Naive thymus-derived CD4-positive, alpha-beta T cell (primary cell): ENCODE measurements at regions of chr19 and their contacts with region 1.

Region 1: DNA sequence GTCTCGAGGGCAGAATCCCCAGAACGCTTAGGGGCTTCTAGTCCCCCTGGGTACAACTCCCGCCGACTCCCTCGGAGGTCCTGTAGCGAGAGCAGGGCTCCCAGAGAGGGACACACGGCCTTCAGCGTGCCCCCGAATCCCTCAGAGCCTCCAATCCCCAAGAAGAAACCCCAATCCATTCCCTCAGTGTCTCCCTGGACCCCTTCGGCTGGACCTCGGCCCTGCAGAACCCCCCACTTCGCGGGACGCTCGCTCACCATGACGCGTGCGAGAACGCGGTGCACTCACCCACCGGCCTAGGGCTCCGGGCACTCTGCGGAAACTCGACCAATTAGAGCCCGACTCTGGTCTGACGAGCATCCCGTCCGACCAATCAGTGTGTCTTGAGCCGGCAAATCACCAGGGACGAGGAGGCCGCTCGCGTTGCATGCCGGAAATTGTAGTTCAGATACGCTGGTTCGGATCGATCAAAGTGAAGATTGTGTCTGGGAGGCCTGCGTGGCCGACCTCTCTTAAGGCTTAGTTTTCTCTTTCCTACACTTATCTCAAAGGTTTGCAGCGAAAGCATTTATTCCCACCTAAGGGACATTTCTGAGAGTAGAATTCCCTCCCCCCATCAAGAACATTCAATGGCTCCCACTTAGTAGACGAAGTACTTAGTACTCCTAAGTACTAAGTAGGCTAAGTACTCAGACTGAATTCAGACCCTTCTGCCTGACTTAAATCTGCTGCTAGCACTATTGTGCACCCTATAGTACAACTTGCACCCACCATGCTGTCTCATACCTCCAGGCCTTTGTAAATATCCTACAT is at the start of gene TMEM161A:
- DNase-seq: peak; percentile 84 to 96 (median 93)
- ATAC-seq: peak; percentile 100
- H3K4me3 ChIP-seq: peak within 1 kb of the TSS; percentile 84
- H3K4me3 Mint-ChIP-seq: peak within 1 kb of the TSS; percentile 83 to 100 (median 98)
- H3K27ac ChIP-seq: peak within 1 kb of the TSS; percentile 90
- H3K27ac Mint-ChIP-seq: peak within 1 kb of the TSS; percentile 84 to 97 (median 94)
- H3K4me1 ChIP-seq: peaks cover 8 to 9% of the 10 kb centered on the region in 2 donors
- H3K4me1 Mint-ChIP-seq: peaks cover 20 to 41% (median 29%) of the 10 kb centered on the region in 7 donors
- H3K27me3 ChIP-seq: no peaks in the 10 kb centered on the region
- H3K27me3 Mint-ChIP-seq: no peaks in the 10 kb centered on the region
- total RNA-seq, gene TMEM161A: 15.8 to 32.7 (median 23.5) TPM

Region 2: GRCh38 chr19:19033426-19034203 is 104.8 kb before region 1 on chr19 and contains the starts of genes ARMC6 and SUGP2:
- CTCF ChIA-PET with region 1: no interaction called
- POLR2A ChIA-PET with region 1: no interaction called
- intact Hi-C with region 1: loop called (anchors 1 kb)
- DNase-seq: peak; percentile 84 to 96 (median 94)
- ATAC-seq: peak; percentile 87
- H3K4me3 ChIP-seq: peak within 1 kb of the TSS; percentile 84
- H3K4me3 Mint-ChIP-seq: peak within 1 kb of the TSS; percentile 88 to 100 (median 96)
- H3K27ac ChIP-seq: peak within 1 kb of the TSS; percentile 86
- H3K27ac Mint-ChIP-seq: peak within 1 kb of the TSS; percentile 86 to 100 (median 94)
- H3K4me1 ChIP-seq: peaks cover 14 to 16% of the 10 kb centered on the region in 2 donors
- H3K4me1 Mint-ChIP-seq: peaks cover 16 to 40% (median 36%) of the 10 kb centered on the region in 7 donors
- H3K27me3 ChIP-seq: no peaks in the 10 kb centered on the region
- H3K27me3 Mint-ChIP-seq: no peaks in the 10 kb centered on the region
- total RNA-seq, gene ARMC6: 14.0 to 32.6 (median 15.0) TPM
- total RNA-seq, gene SUGP2: 116 to 145 (median 129) TPM

Region 3: DNA sequence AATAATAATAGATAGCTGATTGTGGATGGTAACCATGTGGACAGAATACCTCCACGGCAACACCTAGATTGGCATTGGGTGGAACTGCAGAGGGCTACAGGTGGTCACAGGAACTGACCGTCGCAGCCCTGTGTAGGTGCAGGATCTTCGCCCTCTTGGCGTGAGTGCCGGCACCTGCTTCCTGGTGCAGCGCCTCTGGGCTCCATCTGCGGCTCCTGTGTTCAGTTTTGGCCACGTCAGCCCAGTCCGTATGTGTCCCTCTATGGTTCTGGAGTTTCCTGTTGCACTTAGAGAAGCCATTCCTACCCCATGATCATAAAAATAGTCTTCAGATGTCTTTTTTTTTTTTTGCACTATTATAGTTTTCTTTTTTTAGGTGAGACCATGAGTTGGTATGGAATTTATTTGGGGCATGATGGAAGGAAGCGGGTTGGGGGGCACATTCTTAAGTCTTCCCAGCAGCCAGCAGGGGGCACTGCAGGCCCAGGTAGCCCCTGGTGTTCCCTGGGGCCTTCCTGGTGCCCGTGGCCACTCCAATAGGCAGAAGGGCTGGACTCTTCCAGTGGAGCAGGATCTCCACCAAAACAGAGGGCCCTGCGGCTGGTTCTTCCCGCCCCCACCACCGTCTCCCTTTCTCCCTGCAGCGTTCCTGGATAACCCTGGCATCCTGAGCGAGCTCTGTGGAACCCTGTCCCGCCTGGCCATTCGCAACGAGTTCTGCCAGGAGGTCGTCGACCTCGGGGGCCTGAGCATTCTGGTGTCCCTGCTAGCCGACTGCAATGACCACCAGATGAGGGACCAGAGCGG is 84.7 kb before region 1 on chr19:
- CTCF ChIA-PET with region 1: interaction called, 10 read pairs
- POLR2A ChIA-PET with region 1: interaction called, 4 read pairs
- intact Hi-C with region 1: loop called (anchors 1 kb)
- DNase-seq: peak; percentile 28 to 70 (median 55)
- ATAC-seq: peak; percentile 72
- H3K4me3 ChIP-seq: no peak overlapping the region
- H3K4me3 Mint-ChIP-seq: no peak overlapping the region
- H3K27ac ChIP-seq: no peak overlapping the region
- H3K27ac Mint-ChIP-seq: no peak overlapping the region
- H3K4me1 ChIP-seq: no peaks in the 10 kb centered on the region
- H3K4me1 Mint-ChIP-seq: no peaks in the 10 kb centered on the region
- H3K27me3 ChIP-seq: no peaks in the 10 kb centered on the region
- H3K27me3 Mint-ChIP-seq: no peaks in the 10 kb centered on the region

Region 4: DNA sequence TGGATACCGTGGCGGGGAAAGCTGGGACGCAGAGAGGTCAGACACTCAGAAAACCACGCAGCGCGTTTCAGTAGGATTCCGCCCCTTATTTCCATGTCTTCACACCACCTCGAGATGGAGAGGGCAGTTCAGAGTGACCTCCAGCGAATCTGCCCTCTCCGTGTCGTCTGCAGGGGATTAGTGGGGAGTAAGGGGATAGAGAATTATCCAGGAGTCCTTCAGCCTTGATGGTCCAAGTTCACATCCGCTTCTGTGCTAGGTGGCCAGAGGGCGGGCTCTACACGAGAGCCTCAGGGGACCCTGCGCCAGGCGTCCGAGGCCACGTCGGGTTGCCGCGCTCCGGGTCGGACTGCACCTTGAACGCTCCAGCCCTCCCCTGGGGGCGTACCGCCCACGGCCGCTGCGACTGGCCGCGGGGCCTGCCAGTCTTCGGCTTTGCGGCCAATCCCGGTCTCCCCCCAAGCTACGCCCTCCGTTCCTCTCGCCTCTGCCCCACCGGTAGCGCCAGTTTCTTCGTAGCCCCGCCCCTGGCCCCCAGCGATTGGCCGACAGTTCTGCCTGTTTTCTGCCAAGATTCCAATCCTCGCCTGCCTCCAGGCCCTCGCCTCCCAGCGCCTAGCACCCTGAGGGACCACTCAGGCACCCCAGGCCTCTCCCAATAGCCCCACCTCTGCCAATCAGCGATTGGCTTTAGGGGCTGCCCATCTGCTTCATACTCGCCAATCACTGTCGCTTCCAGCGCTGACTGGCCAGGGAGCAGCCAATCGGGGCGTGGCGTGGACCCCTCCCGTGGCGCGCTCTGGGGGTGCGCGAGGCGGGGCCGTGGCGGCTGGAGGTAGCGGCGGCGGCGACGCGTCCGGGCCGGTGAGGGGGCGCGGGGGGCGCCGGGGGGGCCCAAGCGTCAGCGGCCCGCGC is 74.9 kb before region 1 on chr19 and contains the start of gene SLC25A42:
- CTCF ChIA-PET with region 1: interaction called, 7 read pairs
- POLR2A ChIA-PET with region 1: interaction called, 3 read pairs
- intact Hi-C with region 1: loop called (anchors 1 kb)
- DNase-seq: peak; percentile 93 to 100 (median 99)
- ATAC-seq: peak; percentile 95
- H3K4me3 ChIP-seq: peak within 1 kb of the TSS; percentile 82
- H3K4me3 Mint-ChIP-seq: peak within 1 kb of the TSS; percentile 83 to 99 (median 92)
- H3K27ac ChIP-seq: peak within 1 kb of the TSS; percentile 83
- H3K27ac Mint-ChIP-seq: peak within 1 kb of the TSS; percentile 75 to 98 (median 83)
- H3K4me1 ChIP-seq: peaks cover 11 to 15% of the 10 kb centered on the region in 2 donors
- H3K4me1 Mint-ChIP-seq: peaks cover 5 to 41% (median 35%) of the 10 kb centered on the region in 7 donors
- H3K27me3 ChIP-seq: no peaks in the 10 kb centered on the region
- H3K27me3 Mint-ChIP-seq: no peaks in the 10 kb centered on the region
- total RNA-seq, gene SLC25A42: 19.0 to 36.1 (median 21.6) TPM

Region 5: GRCh38 chr19:19170053-19170872 is 31.9 kb after region 1 on chr19 and contains the start of gene MEF2B:
- CTCF ChIA-PET with region 1: interaction called, 3 read pairs
- POLR2A ChIA-PET with region 1: no interaction called
- intact Hi-C with region 1: loop called in 1 of 2 experiments (anchors 5 kb)
- DNase-seq: peak; percentile 45 to 84 (median 77)
- ATAC-seq: peak; percentile 98
- H3K4me3 ChIP-seq: peak within 1 kb of the TSS; percentile 32
- H3K4me3 Mint-ChIP-seq: peak within 1 kb of the TSS; percentile 2 to 84 (median 71)
- H3K27ac ChIP-seq: no peak within 1 kb of the TSS
- H3K27ac Mint-ChIP-seq: peak within 1 kb of the TSS in 8 of 9 donors; percentile 25 to 70 (median 51)
- H3K4me1 ChIP-seq: peaks cover 0 to 10% of the 10 kb centered on the region in 2 donors
- H3K4me1 Mint-ChIP-seq: peaks cover 14 to 20% (median 17%) of the 10 kb centered on the region in 7 donors
- H3K27me3 ChIP-seq: no peaks in the 10 kb centered on the region
- H3K27me3 Mint-ChIP-seq: peaks cover 0 to 5% (median 0%) of the 10 kb centered on the region in 5 donors
- total RNA-seq, gene MEF2B: 3.0 to 6.4 (median 4.9) TPM